ENCODE measurements at regions of chr6 and their contacts with region 1.

Region 1: GRCh38 chr6:90393232-90393884 is 96.7 kb upstream of the BACH2 start:
- DNase-seq: peak; percentile 53 to 63
- H3K4me3 ChIP-seq: no peak overlapping the region
- H3K27ac ChIP-seq: no peak overlapping the region
- H3K4me1 ChIP-seq: no peaks in the 10 kb centered on the region
- H3K27me3 ChIP-seq: no peaks in the 10 kb centered on the region
- CTCF ChIP-seq: peak; percentile 31 to 82 (median 72)
- POLR2A ChIP-seq: no peak

Region 2: DNA sequence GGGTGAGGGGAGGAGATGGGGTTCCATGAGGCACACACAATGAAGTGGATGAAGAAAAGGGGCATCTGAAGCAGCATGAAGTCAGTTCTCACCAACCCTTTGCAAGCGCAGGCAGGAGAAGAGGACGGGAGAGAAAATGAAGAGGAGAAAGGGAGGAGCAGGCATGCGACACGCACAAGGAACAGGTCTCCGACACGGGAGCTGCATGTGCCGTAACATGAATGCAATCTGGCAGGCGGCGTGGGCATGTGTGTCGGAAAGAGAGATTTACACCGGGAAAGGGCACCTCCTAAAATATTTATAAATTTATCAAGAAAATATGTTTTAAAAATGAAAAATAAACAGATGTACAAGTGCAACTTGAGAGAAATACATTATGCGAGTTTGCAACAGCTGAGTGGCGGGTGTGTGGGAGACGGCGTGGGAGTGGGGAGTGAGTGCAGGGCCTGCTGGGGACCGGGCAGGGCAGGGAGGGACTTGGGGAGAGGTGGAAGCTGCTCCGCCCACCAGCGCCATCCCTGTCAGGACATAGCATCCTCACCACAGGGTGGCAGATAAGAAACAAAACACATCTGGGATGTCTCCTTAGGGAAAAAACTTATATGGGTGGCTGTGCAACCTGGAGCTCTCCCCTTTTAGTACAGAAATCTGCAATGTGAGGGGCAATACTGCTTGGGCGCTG is 458.5 kb before region 1 on chr6:
- intact Hi-C with region 1: loop called (anchors 10 kb)
- DNase-seq: no peak
- H3K4me3 ChIP-seq: no peak overlapping the region
- H3K27ac ChIP-seq: no peak overlapping the region
- H3K4me1 ChIP-seq: no peaks in the 10 kb centered on the region
- H3K27me3 ChIP-seq: no peaks in the 10 kb centered on the region
- CTCF ChIP-seq: no peak
- POLR2A ChIP-seq: no peak

Region 3: DNA sequence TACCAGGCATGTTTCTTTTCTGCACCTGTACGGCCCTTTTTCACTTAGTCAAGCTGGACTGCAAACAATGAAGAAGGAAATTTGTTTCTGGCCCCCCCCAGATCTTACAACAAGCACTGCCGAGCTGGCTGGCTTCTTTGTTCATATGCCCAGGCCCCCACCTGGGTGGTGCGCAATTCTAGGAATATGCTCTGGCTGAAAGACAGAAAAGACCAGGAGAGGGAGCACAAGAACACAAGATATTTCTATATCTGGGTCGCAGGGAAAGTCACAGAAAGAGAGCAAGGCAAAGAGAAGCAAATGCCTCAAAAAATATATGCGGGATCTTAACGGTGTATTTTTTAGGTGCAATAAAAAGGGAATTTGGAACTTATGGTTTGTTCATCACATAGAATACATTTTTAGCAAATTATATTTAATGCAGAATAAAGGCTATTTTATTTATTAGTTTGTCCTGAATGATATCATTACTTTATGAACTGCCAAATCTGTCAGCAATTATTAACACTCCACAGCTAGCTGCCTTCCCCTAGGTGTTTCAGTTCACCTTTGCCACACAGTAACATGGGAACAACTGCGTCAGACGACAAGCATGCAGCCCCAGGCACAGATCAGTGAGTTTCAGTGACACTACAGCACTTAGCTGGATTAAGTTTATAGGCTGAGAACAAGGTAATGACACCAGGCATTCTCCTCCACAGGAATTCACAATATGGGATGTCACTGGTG is 422.6 kb before region 1 on chr6:
- intact Hi-C with region 1: loop called (anchors 10 kb)
- DNase-seq: peak; percentile 23 to 32
- H3K4me3 ChIP-seq: no peak overlapping the region
- H3K27ac ChIP-seq: no peak overlapping the region
- H3K4me1 ChIP-seq: no peaks in the 10 kb centered on the region
- H3K27me3 ChIP-seq: no peaks in the 10 kb centered on the region
- CTCF ChIP-seq: peak; percentile 11 to 66 (median 40)
- POLR2A ChIP-seq: no peak

Region 4: GRCh38 chr6:90444160-90444714 is 50.9 kb after region 1 on chr6:
- intact Hi-C with region 1: no loop called
- DNase-seq: no peak
- H3K4me3 ChIP-seq: no peak overlapping the region
- H3K27ac ChIP-seq: no peak overlapping the region
- H3K4me1 ChIP-seq: no peaks in the 10 kb centered on the region
- H3K27me3 ChIP-seq: no peaks in the 10 kb centered on the region
- CTCF ChIP-seq: no peak
- POLR2A ChIP-seq: no peak

Region 5: GRCh38 chr6:90574610-90575009 is 181.3 kb after region 1 on chr6:
- intact Hi-C with region 1: no loop called
- DNase-seq: no peak
- H3K4me3 ChIP-seq: no peak overlapping the region
- H3K27ac ChIP-seq: no peak overlapping the region
- H3K4me1 ChIP-seq: no peaks in the 10 kb centered on the region
- H3K27me3 ChIP-seq: no peaks in the 10 kb centered on the region
- CTCF ChIP-seq: no peak
- POLR2A ChIP-seq: no peak

Region 6: GRCh38 chr6:91013511-91013910 is 620.2 kb after region 1 on chr6:
- intact Hi-C with region 1: no loop called
- DNase-seq: no peak
- H3K4me3 ChIP-seq: no peak overlapping the region
- H3K27ac ChIP-seq: no peak overlapping the region
- H3K4me1 ChIP-seq: no peaks in the 10 kb centered on the region
- H3K27me3 ChIP-seq: no peaks in the 10 kb centered on the region
- CTCF ChIP-seq: no peak
- POLR2A ChIP-seq: no peak